ENCODE measurements at regions of chr3 and their contacts with region 1.

Region 1: DNA sequence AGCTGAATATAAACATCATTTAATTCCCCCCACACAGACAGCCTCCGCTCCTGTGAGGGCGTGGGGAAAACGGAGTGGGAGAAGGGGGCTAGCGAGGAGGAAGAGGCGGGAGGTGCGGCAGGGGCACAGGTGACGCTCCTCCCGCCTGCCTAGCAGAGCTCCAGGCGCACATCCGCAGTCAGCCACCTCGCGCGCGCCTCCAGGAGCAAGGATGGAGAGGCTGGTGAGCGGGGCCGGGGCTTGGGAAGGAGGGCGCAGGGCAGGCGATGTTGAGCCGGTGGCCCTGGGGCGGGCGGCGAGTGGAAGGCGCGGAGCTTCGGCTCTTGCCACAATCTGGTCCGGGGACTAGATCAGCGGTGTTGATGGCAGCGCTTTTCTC is at the start of gene CD200:
- DNase-seq: peak; percentile 45
- ATAC-seq: peak; percentile 77
- H3K4me3 Mint-ChIP-seq: peak within 1 kb of the TSS; percentile 94
- H3K27ac Mint-ChIP-seq: peak within 1 kb of the TSS; percentile 94
- H3K4me1 Mint-ChIP-seq: peaks cover 59% of the 10 kb centered on the region
- H3K27me3 Mint-ChIP-seq: no peaks in the 10 kb centered on the region
- CTCF ChIP-seq: no peak
- total RNA-seq, gene CD200: 19.0 and 19.4 TPM in 2 replicates

Region 2: DNA sequence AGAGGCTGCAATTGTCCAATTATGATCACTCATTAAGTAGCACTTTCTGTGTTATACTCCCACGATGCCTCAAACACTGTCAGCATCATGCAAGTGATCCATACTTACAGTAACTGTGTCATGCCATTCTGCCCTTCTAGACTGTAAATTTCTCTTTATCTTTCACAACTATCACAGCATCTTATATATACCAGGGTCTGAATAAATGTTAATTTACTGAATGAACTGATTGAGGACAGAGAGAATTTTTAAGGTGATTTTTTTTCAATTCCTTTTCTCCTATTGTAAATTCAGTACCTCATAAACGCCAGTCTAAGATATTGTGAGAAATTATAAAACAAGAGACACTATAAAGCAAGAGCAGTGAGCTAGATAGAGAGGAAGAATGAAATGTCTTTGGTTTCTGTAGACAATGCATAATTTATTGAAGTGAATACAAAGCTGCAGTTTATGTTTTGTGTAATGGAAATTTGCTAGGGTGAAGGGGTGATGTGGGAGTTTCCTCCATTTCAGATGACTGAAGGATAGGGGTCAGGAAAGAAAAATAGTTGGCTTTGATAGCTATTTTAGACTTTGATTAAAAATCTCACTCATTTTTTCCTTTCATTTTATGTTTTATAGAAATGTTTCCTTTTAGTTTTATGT is 17.3 kb after region 1 on chr3:
- CTCF ChIA-PET with region 1: no interaction called
- POLR2A ChIA-PET with region 1: interaction called, 8 read pairs
- intact Hi-C with region 1: loop called (anchors 2 kb)
- DNase-seq: no peak
- ATAC-seq: no peak
- H3K4me3 Mint-ChIP-seq: no peak overlapping the region
- H3K27ac Mint-ChIP-seq: no peak overlapping the region
- H3K4me1 Mint-ChIP-seq: peaks cover 46% of the 10 kb centered on the region
- H3K27me3 Mint-ChIP-seq: no peaks in the 10 kb centered on the region
- CTCF ChIP-seq: no peak

Region 3: DNA sequence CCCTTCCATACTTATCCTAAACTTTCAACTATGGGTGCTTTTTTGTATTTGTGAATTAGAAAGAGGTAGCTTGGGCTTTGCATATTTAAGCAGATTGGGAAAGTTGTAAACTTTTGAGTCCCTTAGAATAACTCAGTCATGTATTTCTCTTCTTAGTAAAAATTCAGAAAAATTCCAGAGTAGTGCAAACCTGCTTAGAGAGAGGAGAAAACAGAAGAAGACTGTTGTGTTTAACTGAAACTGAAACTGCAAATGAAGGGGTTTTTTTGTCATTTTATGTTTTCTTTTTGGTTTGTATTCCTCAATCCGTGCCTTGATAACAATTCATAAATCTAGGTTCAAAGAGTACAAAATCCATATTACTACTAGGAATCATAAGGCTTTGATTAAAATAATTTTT is 31.3 kb after region 1 on chr3:
- CTCF ChIA-PET with region 1: no interaction called
- POLR2A ChIA-PET with region 1: interaction called, 11 read pairs
- intact Hi-C with region 1: no loop called
- DNase-seq: no peak
- ATAC-seq: peak; percentile 57
- H3K4me3 Mint-ChIP-seq: peak overlapping the region; percentile 25
- H3K27ac Mint-ChIP-seq: peak overlapping the region; percentile 82
- H3K4me1 Mint-ChIP-seq: peaks cover 33% of the 10 kb centered on the region
- H3K27me3 Mint-ChIP-seq: no peaks in the 10 kb centered on the region
- CTCF ChIP-seq: no peak

Region 4: DNA sequence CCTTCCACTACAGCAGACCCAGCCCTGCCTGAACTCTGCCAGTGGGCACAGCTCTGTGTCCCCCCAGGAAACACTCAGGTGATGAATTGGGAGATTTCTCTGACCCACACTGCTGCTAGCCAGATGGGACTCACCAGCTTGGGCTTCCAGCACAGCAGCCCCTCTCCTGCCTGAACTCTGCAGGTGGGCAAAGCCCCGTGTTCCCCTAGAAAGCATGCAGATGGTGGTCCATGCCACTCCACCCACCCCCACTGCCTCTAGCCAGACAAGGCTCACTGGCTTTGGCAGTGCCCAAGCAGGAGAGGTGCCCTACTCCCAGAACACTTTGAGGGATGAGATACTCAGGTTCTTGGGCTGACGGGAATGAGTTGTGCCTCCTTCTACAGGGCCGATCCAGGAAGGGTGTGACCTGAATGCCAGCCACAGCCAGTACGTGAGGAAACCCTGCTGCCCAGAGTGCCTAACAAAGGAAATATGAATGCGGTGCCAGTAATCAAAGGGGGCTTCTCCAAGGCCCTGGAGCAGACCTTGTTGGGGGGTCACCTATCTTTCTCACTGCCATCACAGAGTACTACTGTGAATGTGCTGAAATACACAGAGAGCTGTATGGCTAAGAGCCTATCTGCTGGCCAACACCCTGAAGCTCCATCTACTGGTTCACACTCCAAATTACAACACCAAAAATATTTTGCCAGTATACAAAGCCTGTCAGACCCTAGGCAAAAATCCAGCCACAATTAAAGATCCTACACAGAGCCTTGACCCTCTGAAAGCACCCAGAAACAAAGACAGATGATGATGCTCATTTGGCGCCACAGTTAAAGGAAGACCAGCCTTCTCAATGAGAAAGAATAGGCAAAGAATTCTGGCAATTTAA is 104.4 kb after region 1 on chr3:
- CTCF ChIA-PET with region 1: interaction called, 15 read pairs
- POLR2A ChIA-PET with region 1: interaction called, 5 read pairs
- intact Hi-C with region 1: no loop called
- DNase-seq: no peak
- ATAC-seq: peak; percentile 84
- H3K4me3 Mint-ChIP-seq: no peak overlapping the region
- H3K27ac Mint-ChIP-seq: no peak overlapping the region
- H3K4me1 Mint-ChIP-seq: peaks cover 58% of the 10 kb centered on the region
- H3K27me3 Mint-ChIP-seq: no peaks in the 10 kb centered on the region
- CTCF ChIP-seq: no peak

Region 5: DNA sequence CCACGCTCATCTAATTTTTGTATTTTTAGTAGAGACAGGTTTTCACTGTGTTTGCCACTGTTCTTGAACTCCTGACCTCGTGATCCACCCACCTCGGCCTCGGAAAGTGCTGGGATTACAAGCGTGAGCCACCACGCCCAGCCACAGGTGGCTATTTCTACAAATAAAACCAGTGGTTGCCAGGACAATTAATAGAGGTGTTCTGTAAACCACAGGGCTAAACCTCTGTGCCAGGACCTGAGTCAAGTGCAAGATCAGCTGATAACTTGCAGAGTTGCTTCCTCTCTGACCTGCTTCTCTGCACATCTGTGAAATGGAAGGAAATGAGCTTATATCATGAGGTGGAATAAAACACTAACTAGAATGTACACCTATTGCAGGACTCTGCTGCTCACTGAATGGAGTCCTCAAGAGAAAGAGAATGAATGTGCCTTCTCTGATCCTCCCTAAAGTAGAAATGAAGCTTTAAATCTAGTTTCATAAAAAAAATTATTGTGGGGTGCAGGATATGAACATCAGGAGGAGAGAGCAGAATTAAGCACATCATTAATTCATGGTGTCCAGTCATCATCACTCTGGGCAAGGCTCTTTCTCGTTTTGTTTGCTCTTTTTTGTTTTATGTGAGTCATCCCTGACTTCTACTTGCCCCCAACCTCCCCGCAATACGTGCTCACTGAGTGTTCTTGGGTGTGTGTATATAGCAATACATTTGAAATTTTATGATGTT is 441.0 kb after region 1 on chr3:
- CTCF ChIA-PET with region 1: no interaction called
- POLR2A ChIA-PET with region 1: no interaction called
- intact Hi-C with region 1: no loop called
- DNase-seq: no peak
- ATAC-seq: peak; percentile 49
- H3K4me3 Mint-ChIP-seq: no peak overlapping the region
- H3K27ac Mint-ChIP-seq: peak overlapping the region; percentile 52
- H3K4me1 Mint-ChIP-seq: peaks cover 52% of the 10 kb centered on the region
- H3K27me3 Mint-ChIP-seq: no peaks in the 10 kb centered on the region
- CTCF ChIP-seq: no peak